ENCODE measurements at regions of chr2 and their contacts with region 1.

Region 1: DNA sequence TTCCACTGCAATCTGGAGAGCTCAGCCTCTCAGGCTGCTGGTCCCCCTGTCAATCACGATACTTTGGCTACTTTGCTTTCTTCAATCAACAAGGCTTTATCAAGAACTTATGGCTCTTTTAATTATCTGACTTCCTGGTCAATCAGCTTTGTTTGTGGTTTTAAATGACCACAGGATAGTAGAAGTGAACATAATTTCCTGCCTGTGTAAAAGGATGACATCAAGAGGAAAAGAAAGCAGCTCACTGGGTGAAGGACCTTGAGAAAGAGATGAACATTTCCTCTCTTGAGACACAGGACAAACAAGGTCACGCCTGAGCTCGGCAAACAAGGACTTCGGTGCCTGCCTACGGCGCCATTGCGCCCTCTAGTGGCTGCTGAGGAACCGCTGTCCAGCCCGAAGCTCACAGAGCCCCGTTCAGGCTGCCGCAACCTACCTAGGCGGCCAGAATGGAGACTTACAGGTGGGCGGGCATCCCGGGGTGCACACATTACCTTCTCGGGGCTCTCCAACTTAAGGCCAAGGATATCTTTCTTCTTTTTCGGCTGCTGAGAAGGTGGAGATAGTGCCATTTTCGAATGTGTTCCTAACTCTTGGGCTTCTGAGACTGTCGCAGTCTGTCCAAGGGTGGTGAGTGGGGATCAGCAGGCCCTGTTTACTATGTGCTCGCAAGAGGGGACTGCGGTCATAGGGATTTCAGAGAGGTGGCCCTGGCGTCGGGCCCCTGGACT is 54.0 kb downstream of the IL1RL2 start:
- DNase-seq: peak; percentile 55 to 93 (median 78)
- ATAC-seq: peak; percentile 89 to 97 (median 95)
- H3K4me3 ChIP-seq: no peak overlapping the region
- H3K4me3 Mint-ChIP-seq: peak overlapping the region in 1 of 3 donors; percentile 21
- H3K27ac ChIP-seq: no peak overlapping the region
- H3K27ac Mint-ChIP-seq: peak overlapping the region; percentile 78 to 83
- H3K4me1 ChIP-seq: peaks cover 0 to 10% of the 10 kb centered on the region in 2 experiments
- H3K4me1 Mint-ChIP-seq: peaks cover 8 to 30% (median 23%) of the 10 kb centered on the region in 3 donors
- H3K27me3 ChIP-seq: no peaks in the 10 kb centered on the region
- H3K27me3 Mint-ChIP-seq: peaks cover 3% of the 10 kb centered on the region in 2 donors

Region 2: GRCh38 chr2:101883863-101884262 is 356.9 kb before region 1 on chr2:
- CTCF ChIA-PET with region 1: interaction called, 12 to 28 read pairs
- POLR2A ChIA-PET with region 1: no interaction called
- DNase-seq: peak in 13 of 35 experiments; percentile 5 to 58 (median 13)
- ATAC-seq: peak in 2 of 4 experiments; percentile 46 to 57
- H3K4me3 ChIP-seq: no peak overlapping the region
- H3K4me3 Mint-ChIP-seq: no peak overlapping the region
- H3K27ac ChIP-seq: no peak overlapping the region
- H3K27ac Mint-ChIP-seq: peak overlapping the region in 1 of 2 donors; percentile 40
- H3K4me1 ChIP-seq: no peaks in the 10 kb centered on the region
- H3K4me1 Mint-ChIP-seq: peaks cover 2 to 8% (median 7%) of the 10 kb centered on the region in 3 donors
- H3K27me3 ChIP-seq: no peaks in the 10 kb centered on the region
- H3K27me3 Mint-ChIP-seq: no peaks in the 10 kb centered on the region

Region 3: DNA sequence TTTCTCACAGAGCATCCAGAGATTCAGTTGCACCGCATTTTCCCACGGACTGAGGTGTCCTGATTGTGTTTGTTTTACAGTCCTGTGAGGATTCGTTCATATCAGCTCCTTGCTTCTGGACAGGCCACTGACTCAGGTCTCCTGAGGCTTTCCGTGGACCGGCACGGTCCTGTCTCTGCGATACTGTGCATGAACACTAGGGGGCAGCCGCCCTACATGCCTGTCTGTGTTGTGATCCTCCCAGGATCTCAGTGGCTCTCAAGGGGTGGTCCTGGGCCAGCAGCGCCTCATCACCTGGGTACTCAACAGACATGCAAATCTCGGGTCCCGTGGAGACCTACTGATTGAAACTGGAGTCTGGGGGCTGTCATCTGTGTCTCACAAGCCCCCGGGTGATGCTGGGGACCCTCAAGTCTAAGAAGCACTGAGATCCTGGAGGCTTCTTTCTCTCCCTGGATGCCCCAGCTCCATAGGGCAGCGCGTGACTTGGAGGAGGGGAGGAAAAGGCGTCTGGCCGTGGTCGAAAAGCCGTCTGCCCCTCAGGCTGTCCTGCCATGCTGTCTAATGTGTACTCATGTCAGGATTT is 220.1 kb before region 1 on chr2:
- CTCF ChIA-PET with region 1: interaction called, 36 to 40 read pairs
- POLR2A ChIA-PET with region 1: no interaction called
- DNase-seq: peak; percentile 48 to 86 (median 74)
- ATAC-seq: peak; percentile 82 to 92 (median 89)
- H3K4me3 ChIP-seq: no peak overlapping the region
- H3K4me3 Mint-ChIP-seq: no peak overlapping the region
- H3K27ac ChIP-seq: no peak overlapping the region
- H3K27ac Mint-ChIP-seq: no peak overlapping the region
- H3K4me1 ChIP-seq: peaks cover 0 to 6% of the 10 kb centered on the region in 2 experiments
- H3K4me1 Mint-ChIP-seq: peaks cover 6 to 7% (median 6%) of the 10 kb centered on the region in 3 donors
- H3K27me3 ChIP-seq: peaks cover 0 to 5% of the 10 kb centered on the region in 2 experiments
- H3K27me3 Mint-ChIP-seq: peaks cover 3 to 7% of the 10 kb centered on the region in 2 donors

Region 4: DNA sequence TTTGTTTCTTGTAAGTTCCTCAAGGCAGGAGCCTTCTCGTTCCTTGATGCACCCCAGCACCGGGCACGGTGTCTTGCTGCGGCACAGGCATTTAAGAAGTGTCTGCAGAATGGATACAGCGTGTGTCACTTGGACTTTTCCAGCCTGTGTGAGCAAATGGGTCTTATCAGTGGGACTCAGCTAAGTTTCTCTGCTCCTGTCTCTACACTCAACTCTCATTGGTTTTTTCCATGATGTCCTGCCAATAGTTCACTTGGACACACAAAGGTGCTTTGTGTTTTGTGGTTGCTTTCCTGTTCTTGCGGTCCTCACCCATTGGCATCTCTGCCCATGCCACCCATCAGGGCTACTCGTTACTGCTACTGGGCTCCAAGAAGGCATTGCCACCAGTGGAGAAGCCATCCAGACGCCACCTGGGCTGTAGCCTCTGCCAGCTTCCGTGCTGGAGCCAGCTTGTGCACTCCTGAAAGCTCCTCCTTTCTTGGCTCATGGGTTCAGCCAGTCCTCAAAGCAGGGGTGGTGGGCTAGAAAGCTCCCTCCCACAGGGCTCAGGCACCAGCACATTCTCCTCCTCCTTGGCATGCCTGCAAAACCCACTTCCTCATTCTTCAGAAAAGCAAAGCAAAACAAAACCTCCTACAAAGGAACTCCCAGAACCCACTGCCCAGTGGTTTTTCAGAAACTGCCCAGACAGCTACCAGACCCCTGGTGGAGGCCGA is 207.6 kb before region 1 on chr2:
- CTCF ChIA-PET with region 1: interaction called, 7 to 13 read pairs
- POLR2A ChIA-PET with region 1: no interaction called
- DNase-seq: peak in 20 of 35 experiments; percentile 1 to 36 (median 8)
- ATAC-seq: peak; percentile 48 to 83 (median 76)
- H3K4me3 ChIP-seq: no peak overlapping the region
- H3K4me3 Mint-ChIP-seq: peak overlapping the region in 2 of 3 donors; percentile 2 to 69
- H3K27ac ChIP-seq: no peak overlapping the region
- H3K27ac Mint-ChIP-seq: peak overlapping the region; percentile 78 to 83
- H3K4me1 ChIP-seq: peaks cover 7 to 19% of the 10 kb centered on the region in 2 experiments
- H3K4me1 Mint-ChIP-seq: peaks cover 31 to 32% (median 32%) of the 10 kb centered on the region in 3 donors
- H3K27me3 ChIP-seq: no peaks in the 10 kb centered on the region
- H3K27me3 Mint-ChIP-seq: no peaks in the 10 kb centered on the region

Region 5: GRCh38 chr2:102251042-102251848 is 10.4 kb after region 1 on chr2:
- CTCF ChIA-PET with region 1: interaction called, 6 to 17 read pairs
- POLR2A ChIA-PET with region 1: no interaction called
- DNase-seq: peak; percentile 27 to 78 (median 55)
- ATAC-seq: peak; percentile 80 to 85 (median 84)
- H3K4me3 ChIP-seq: peak overlapping the region; percentile 54 to 89
- H3K4me3 Mint-ChIP-seq: peak overlapping the region; percentile 82 to 96 (median 83)
- H3K27ac ChIP-seq: no peak overlapping the region
- H3K27ac Mint-ChIP-seq: peak overlapping the region in 1 of 2 donors; percentile 64
- H3K4me1 ChIP-seq: peaks cover 4 to 21% of the 10 kb centered on the region in 2 experiments
- H3K4me1 Mint-ChIP-seq: peaks cover 17 to 35% (median 26%) of the 10 kb centered on the region in 3 donors
- H3K27me3 ChIP-seq: peaks cover 0 to 10% of the 10 kb centered on the region in 2 experiments
- H3K27me3 Mint-ChIP-seq: peaks cover 0 to 3% of the 10 kb centered on the region in 2 donors

Region 6: GRCh38 chr2:102342891-102343290 is 102.1 kb after region 1 on chr2:
- CTCF ChIA-PET with region 1: no interaction called
- POLR2A ChIA-PET with region 1: no interaction called
- DNase-seq: no peak
- ATAC-seq: no peak
- H3K4me3 ChIP-seq: no peak overlapping the region
- H3K4me3 Mint-ChIP-seq: no peak overlapping the region
- H3K27ac ChIP-seq: no peak overlapping the region
- H3K27ac Mint-ChIP-seq: no peak overlapping the region
- H3K4me1 ChIP-seq: no peaks in the 10 kb centered on the region
- H3K4me1 Mint-ChIP-seq: peaks cover 0 to 2% (median 2%) of the 10 kb centered on the region in 3 donors
- H3K27me3 ChIP-seq: peaks cover 0 to 4% of the 10 kb centered on the region in 2 experiments
- H3K27me3 Mint-ChIP-seq: peaks cover 0 to 3% of the 10 kb centered on the region in 2 donors

Region 7: GRCh38 chr2:102442967-102443828 is 202.4 kb after region 1 on chr2:
- CTCF ChIA-PET with region 1: interaction called, 8 to 22 read pairs
- POLR2A ChIA-PET with region 1: no interaction called
- DNase-seq: peak in 32 of 35 experiments; percentile 7 to 74 (median 35)
- ATAC-seq: peak; percentile 68 to 85 (median 78)
- H3K4me3 ChIP-seq: no peak overlapping the region
- H3K4me3 Mint-ChIP-seq: peak overlapping the region; percentile 26 to 40 (median 27)
- H3K27ac ChIP-seq: peak overlapping the region; percentile 26
- H3K27ac Mint-ChIP-seq: peak overlapping the region; percentile 66 to 73
- H3K4me1 ChIP-seq: peaks cover 0 to 3% of the 10 kb centered on the region in 2 experiments
- H3K4me1 Mint-ChIP-seq: peaks cover 6 to 8% (median 8%) of the 10 kb centered on the region in 3 donors
- H3K27me3 ChIP-seq: no peaks in the 10 kb centered on the region
- H3K27me3 Mint-ChIP-seq: no peaks in the 10 kb centered on the region

Measured in T-cell (primary cell).